H1 (cell line): ENCODE measurements at regions of chr3 and their contacts with region 1.

Region 1: GRCh38 chr3:44186111-44186672 is 55.5 kb upstream of the TOPAZ1 start:
- DNase-seq: no peak
- H3K4me3 ChIP-seq: no peak overlapping the region
- H3K27ac ChIP-seq: no peak overlapping the region
- H3K4me1 ChIP-seq: peaks cover 0 to 8% (median 6%) of the 10 kb centered on the region in 4 experiments; a peak in 4 of 7 replicates
- H3K27me3 ChIP-seq: no peaks in the 10 kb centered on the region
- CTCF ChIP-seq: no peak
- EP300 ChIP-seq: no peak
- POLR2A ChIP-seq: no peak
- RAD21 ChIP-seq: no peak

Region 2: GRCh38 chr3:44003801-44004200 is 182.4 kb before region 1 on chr3:
- CTCF ChIA-PET with region 1: no interaction called
- POLR2A ChIA-PET with region 1: no interaction called
- DNase-seq: no peak
- H3K4me3 ChIP-seq: no peak overlapping the region
- H3K27ac ChIP-seq: no peak overlapping the region
- H3K4me1 ChIP-seq: peaks cover 0 to 4% (median 3%) of the 10 kb centered on the region in 4 experiments; a peak in 3 of 7 replicates
- H3K27me3 ChIP-seq: peaks cover 2 to 14% (median 9%) of the 10 kb centered on the region in 4 experiments
- CTCF ChIP-seq: no peak
- EP300 ChIP-seq: no peak
- POLR2A ChIP-seq: no peak
- RAD21 ChIP-seq: no peak

Region 3: GRCh38 chr3:44198284-44199269 is 12.4 kb after region 1 on chr3:
- CTCF ChIA-PET with region 1: interaction called, 23 read pairs
- POLR2A ChIA-PET with region 1: no interaction called
- DNase-seq: peak; percentile 21 to 84
- H3K4me3 ChIP-seq: no peak overlapping the region
- H3K27ac ChIP-seq: no peak overlapping the region
- H3K4me1 ChIP-seq: peaks cover 0 to 3% (median under 1%) of the 10 kb centered on the region in 4 experiments; a peak in 1 of 7 replicates
- H3K27me3 ChIP-seq: 0 out of 7 replicates have a peak, but pooled peaks cover 0 to 3% (median 0%) of the 10 kb centered on the region in 4 experiments
- CTCF ChIP-seq: peak; percentile 58 to 88 (median 85)
- EP300 ChIP-seq: no peak
- POLR2A ChIP-seq: no peak
- RAD21 ChIP-seq: peak; percentile 96 to 98

Region 4: GRCh38 chr3:44355362-44356033 is 169.3 kb after region 1 on chr3:
- CTCF ChIA-PET with region 1: no interaction called
- POLR2A ChIA-PET with region 1: no interaction called
- DNase-seq: no peak
- H3K4me3 ChIP-seq: no peak overlapping the region; a peak in 1 of 8 replicates
- H3K27ac ChIP-seq: no peak overlapping the region
- H3K4me1 ChIP-seq: peaks cover 3 to 10% (median 5%) of the 10 kb centered on the region in 4 experiments; a peak in 4 of 7 replicates
- H3K27me3 ChIP-seq: no peaks in the 10 kb centered on the region
- CTCF ChIP-seq: no peak
- EP300 ChIP-seq: no peak
- POLR2A ChIP-seq: no peak
- RAD21 ChIP-seq: no peak